GM10248 (cell line): ENCODE measurements at regions of chr3 and their contacts with region 1.

Region 1: GRCh38 chr3:167380004-167380689 is at the start of gene ZBBX:
- DNase-seq: peak; percentile 78
- CTCF ChIP-seq: peak; percentile 97

Region 2: GRCh38 chr3:167361306-167361705 is 18.8 kb before region 1 on chr3:
- CTCF ChIA-PET with region 1: interaction called, 26 read pairs
- POLR2A ChIA-PET with region 1: no interaction called
- DNase-seq: no peak
- CTCF ChIP-seq: no peak

Region 3: DNA sequence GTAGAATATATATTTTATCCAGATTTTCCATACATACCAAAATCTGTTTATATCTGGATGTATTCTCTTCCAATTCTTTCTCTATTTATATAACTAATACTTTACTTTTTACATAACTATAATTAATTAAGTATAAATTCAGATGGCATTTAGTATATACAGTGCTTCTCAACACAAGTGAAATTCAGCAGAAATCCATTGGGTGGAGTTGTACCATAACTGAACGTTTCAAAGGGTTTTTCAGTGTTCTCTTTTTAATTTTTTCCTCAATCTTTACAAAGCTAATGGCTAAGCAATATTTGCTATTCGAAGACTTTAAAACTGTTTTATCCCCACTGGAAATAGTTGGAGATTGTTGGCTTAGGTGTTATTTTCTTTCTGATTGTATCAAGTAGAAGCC is 13.9 kb after region 1 on chr3:
- CTCF ChIA-PET with region 1: interaction called, 68 read pairs
- POLR2A ChIA-PET with region 1: no interaction called
- DNase-seq: no peak
- CTCF ChIP-seq: no peak

Region 4: GRCh38 chr3:167684388-167684993 is 304.3 kb after region 1 on chr3:
- CTCF ChIA-PET with region 1: interaction called, 22 read pairs
- POLR2A ChIA-PET with region 1: no interaction called
- DNase-seq: peak; percentile 36
- CTCF ChIP-seq: peak; percentile 61

Region 5: GRCh38 chr3:167740961-167741587 is 360.9 kb after region 1 on chr3:
- CTCF ChIA-PET with region 1: interaction called, 27 read pairs
- POLR2A ChIA-PET with region 1: no interaction called
- DNase-seq: peak; percentile 40
- CTCF ChIP-seq: peak; percentile 72

Region 6: DNA sequence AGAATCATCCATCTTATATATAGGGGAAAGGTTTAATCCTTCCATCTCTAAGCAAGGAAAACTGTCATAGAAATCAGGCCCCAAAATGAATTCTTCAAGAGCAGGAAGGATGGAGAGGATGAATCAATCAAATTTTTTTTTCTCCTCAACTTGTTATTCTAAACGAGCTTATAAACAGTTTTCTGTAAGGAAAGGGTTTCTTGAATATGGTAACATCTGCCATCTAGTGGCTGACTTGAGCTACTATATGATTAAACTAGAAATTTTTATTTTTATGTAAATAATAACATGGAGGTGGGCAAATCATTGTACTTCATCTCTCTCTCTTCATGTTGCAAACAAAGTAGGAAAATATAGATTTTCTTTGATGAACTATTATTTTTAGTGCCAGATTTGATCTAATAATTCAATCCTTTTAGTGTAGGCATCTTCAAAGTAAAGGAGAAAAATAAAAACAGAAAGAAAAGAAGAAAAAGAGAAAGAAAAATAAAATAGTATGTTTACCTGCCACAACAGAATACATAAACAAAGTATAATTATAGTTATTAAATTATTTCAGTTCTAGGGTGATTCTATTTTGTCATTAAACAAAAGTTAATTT is 502.0 kb after region 1 on chr3:
- CTCF ChIA-PET with region 1: interaction called, 66 read pairs
- POLR2A ChIA-PET with region 1: no interaction called
- DNase-seq: peak; percentile 31
- CTCF ChIP-seq: peak; percentile 28